ENCODE measurements at regions of chr6 and their contacts with region 1.

Region 1: DNA sequence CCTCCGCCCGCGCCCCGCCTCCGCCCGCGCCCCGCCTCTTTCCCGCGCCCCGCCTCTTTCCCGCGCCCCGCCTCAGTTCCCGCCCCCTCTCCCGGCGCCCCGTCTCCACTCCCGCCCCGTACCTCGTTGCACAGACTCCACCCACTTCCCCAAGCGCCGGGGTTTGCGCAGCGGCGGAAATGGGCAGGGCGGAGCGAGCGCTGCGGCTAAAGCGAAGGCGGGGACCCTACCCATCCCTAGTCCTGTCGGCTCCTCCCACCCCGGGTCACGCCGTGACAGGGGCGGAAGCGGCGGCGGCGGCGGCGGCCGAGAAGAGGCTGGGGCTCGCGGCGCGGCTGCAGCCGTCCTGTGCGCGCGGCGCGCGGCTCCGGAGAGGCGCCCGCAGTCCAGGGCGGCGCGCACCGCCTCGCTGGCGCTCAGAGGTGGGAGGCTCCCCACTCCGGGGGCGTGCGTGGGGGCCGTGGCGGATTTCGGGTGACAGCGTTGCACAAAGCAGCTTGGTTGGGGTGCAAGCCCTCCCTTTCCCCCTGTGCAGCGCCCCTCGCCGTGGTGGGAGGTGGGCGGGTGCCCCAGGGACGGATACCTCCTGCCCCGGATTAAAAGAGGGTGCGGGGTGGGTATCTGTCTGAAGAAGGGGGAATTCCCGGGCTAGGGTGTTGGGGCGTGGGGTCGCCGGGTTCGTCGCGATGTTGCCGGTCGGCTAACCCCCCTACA is at the start of gene KDM1B:
- DNase-seq: peak; percentile 96
- ATAC-seq: peak; percentile 91
- H3K4me3 Mint-ChIP-seq: peak within 1 kb of the TSS; percentile 97
- H3K27ac Mint-ChIP-seq: peak within 1 kb of the TSS; percentile 93
- H3K4me1 Mint-ChIP-seq: peaks cover 28% of the 10 kb centered on the region
- H3K27me3 Mint-ChIP-seq: no peaks in the 10 kb centered on the region
- CTCF ChIP-seq: no peak
- total RNA-seq, gene KDM1B: 19.6 and 21.0 TPM in 2 replicates

Region 2: GRCh38 chr6:17599885-17600526 is 555.3 kb before region 1 on chr6 and contains the start of gene FAM8A1:
- CTCF ChIA-PET with region 1: no interaction called
- POLR2A ChIA-PET with region 1: interaction called, 3 read pairs
- intact Hi-C with region 1: loop called (anchors 1 kb)
- DNase-seq: peak; percentile 88
- ATAC-seq: peak; percentile 91
- H3K4me3 Mint-ChIP-seq: peak within 1 kb of the TSS; percentile 80
- H3K27ac Mint-ChIP-seq: peak within 1 kb of the TSS; percentile 78
- H3K4me1 Mint-ChIP-seq: peaks cover 11% of the 10 kb centered on the region
- H3K27me3 Mint-ChIP-seq: no peaks in the 10 kb centered on the region
- CTCF ChIP-seq: no peak
- total RNA-seq, gene FAM8A1: 2.6 and 3.0 TPM in 2 replicates

Region 3: DNA sequence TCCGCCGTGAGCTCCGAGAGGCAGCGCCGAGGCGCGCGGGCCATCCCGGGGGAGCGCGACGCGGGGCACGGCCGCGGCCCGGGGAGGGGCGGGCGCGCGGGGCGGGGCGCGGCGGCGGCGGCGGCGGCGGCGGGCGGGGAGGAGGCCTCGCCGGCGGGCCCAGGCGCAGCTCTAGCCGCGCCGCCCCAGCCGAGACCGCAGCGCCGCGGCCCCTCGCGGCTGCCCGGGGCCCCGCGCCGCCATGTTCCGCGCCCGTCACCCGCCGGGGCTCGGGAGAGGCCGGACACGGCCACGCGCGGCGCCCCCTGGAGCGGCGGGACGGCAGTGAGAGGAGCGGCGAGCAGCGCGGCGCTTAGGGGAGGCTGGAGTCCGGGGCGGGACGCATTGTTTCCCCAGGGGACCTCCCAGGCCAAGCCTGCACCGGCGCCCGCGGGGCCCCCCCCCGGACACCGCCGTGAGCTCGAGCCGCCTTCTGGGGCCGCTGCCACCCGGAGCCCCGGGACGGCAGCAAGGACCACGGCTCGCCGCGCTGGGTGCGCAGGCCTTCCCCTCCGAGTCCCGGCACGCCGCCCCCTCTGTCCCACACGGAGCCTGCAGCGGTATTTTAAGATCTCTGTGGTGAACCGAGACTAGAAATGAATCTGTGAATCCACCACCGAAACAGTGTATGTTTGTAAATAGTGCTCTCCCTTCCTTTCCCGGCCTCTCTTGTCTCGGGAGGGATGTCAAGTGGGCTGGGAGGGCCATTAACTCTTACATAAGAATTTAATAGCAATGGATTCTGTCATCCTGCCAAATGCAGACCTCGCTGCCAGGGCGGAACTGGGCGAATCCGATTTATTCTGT is 167.5 kb before region 1 on chr6 and contains the start of gene KIF13A:
- CTCF ChIA-PET with region 1: no interaction called
- POLR2A ChIA-PET with region 1: interaction called, 3 read pairs
- intact Hi-C with region 1: loop called (anchors 1 kb)
- DNase-seq: peak; percentile 72
- ATAC-seq: peak; percentile 76
- H3K4me3 Mint-ChIP-seq: peak within 1 kb of the TSS; percentile 91
- H3K27ac Mint-ChIP-seq: peak within 1 kb of the TSS; percentile 88
- H3K4me1 Mint-ChIP-seq: peaks cover 32% of the 10 kb centered on the region
- H3K27me3 Mint-ChIP-seq: no peaks in the 10 kb centered on the region
- CTCF ChIP-seq: no peak
- total RNA-seq, gene KIF13A: 13.1 and 14.1 TPM in 2 replicates

Region 4: DNA sequence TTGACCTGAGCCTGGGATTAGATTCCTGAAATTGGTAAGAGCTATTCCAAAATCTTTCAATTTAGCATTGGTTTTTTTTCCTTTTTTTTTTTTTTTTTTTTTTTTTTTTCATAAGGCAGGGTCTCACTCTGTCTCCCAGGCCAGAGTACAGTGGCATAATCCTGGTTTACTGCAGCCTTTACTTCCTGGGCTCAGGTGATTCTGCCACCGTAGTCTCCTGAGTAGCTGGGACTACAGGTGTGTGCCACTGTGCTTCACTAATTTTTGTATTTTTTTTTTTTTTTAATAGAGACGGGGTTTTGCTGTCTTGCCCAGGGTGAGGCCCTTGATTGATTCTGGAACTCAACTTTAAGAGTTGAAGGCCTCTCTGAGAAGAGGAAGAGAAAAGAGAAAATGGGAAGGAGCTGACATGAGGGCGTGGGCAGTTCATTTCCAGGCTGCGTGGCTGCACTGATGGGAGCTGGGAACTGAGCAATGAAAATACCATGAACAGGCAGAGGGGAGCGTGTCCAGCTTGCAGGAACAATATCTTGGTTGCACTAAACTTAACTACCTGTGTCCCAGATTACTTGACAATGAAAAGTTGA is 24.6 kb after region 1 on chr6:
- CTCF ChIA-PET with region 1: no interaction called
- POLR2A ChIA-PET with region 1: no interaction called
- intact Hi-C with region 1: loop called (anchors 2 kb)
- DNase-seq: no peak
- ATAC-seq: no peak
- H3K4me3 Mint-ChIP-seq: peak overlapping the region; percentile 45
- H3K27ac Mint-ChIP-seq: peak overlapping the region; percentile 59
- H3K4me1 Mint-ChIP-seq: peaks cover 40% of the 10 kb centered on the region
- H3K27me3 Mint-ChIP-seq: no peaks in the 10 kb centered on the region
- CTCF ChIP-seq: no peak

Region 5: GRCh38 chr6:18330548-18331081 is 175.3 kb after region 1 on chr6:
- CTCF ChIA-PET with region 1: no interaction called
- POLR2A ChIA-PET with region 1: interaction called, 3 read pairs
- intact Hi-C with region 1: loop called (anchors 5 kb)
- DNase-seq: peak; percentile 24
- ATAC-seq: peak; percentile 62
- H3K4me3 Mint-ChIP-seq: peak overlapping the region; percentile 29
- H3K27ac Mint-ChIP-seq: peak overlapping the region; percentile 84
- H3K4me1 Mint-ChIP-seq: peaks cover 53% of the 10 kb centered on the region
- H3K27me3 Mint-ChIP-seq: no peaks in the 10 kb centered on the region
- CTCF ChIP-seq: no peak

Measured in activated B cell treated with CpG ODN at 0.5 μM for 24 hours (primary cell).